GM12878 (cell line): ENCODE measurements at regions of chr4 and their contacts with region 1.

Region 1: GRCh38 chr4:142567199-142567598 is 278.9 kb downstream of the INPP4B start:
- DNase-seq: no peak
- ATAC-seq: peak; percentile 70
- H3K4me3 ChIP-seq: no peak overlapping the region
- H3K27ac ChIP-seq: no peak overlapping the region
- H3K4me1 ChIP-seq: no peaks in the 10 kb centered on the region
- H3K27me3 ChIP-seq: no peaks in the 10 kb centered on the region
- CTCF ChIP-seq: peak in 1 of 3 experiments; percentile 28; a peak in 2 of 6 replicates
- EP300 ChIP-seq: no peak
- POLR2A ChIP-seq: no peak
- RAD21 ChIP-seq: no peak

Region 2: DNA sequence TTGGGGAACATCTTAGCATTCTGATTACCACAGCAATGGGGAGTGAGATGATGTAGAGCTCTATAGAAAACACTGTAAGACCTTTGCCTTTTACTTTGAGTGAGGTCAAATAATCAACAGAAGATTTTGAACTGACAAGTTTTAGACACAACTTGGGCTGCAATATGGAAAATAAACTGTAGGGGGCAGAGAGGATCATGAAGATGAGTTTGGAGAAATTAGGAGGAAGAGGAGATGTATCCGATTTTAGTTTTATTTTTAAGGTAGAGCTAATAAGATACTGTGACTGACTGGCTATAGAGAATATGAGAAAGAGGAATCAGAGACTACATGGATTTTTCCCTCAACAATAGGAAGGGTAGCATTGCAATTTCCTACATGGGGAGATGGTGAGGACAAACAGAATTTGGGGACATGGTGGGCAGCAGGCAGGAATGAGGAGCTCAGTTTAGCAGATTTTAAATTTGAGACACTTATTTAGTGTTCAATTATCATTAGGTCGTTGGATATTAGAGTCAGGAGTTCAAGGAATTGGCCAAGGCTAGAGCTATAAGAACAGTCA is 284.2 kb before region 1 on chr4:
- CTCF ChIA-PET with region 1: interaction called, 21 read pairs
- POLR2A ChIA-PET with region 1: no interaction called
- RAD21 ChIA-PET with region 1: interaction called, 31 read pairs
- SMC1A ChIA-PET with region 1: interaction called, 13 read pairs
- in situ Hi-C with region 1: no loop called
- intact Hi-C with region 1: no loop called
- DNase-seq: no peak
- ATAC-seq: peak; percentile 47
- H3K4me3 ChIP-seq: no peak overlapping the region
- H3K27ac ChIP-seq: no peak overlapping the region
- H3K4me1 ChIP-seq: no peaks in the 10 kb centered on the region
- H3K27me3 ChIP-seq: no peaks in the 10 kb centered on the region
- CTCF ChIP-seq: peak; percentile 48 to 53 (median 49); a peak in 5 of 6 replicates
- EP300 ChIP-seq: no peak
- POLR2A ChIP-seq: no peak
- RAD21 ChIP-seq: peak; percentile 35

Region 3: DNA sequence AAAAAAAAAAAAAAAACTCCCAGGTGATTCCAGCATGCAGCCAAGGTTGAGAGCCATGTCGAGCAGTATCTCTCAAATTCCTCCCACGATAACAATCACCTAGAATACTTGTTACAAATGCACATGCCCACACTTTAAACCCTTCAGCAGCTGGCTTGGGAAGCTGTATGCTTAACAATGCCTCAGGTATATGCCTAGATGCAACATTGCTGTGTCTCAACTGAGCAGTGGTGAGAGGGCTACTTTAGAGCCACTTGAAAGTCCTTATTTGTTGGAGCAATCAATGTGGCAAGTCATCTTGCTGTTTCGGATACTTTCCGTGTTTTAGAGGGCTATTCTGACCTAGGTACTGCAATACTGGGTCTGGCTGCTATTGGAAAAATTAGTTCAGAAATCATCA is 208.5 kb before region 1 on chr4:
- CTCF ChIA-PET with region 1: interaction called, 119 read pairs
- POLR2A ChIA-PET with region 1: interaction called, 6 read pairs
- RAD21 ChIA-PET with region 1: interaction called, 133 read pairs
- SMC1A ChIA-PET with region 1: interaction called, 120 read pairs
- in situ Hi-C with region 1: no loop called
- intact Hi-C with region 1: loop called (anchors 5 kb)
- DNase-seq: no peak
- ATAC-seq: peak; percentile 45
- H3K4me3 ChIP-seq: no peak overlapping the region
- H3K27ac ChIP-seq: no peak overlapping the region
- H3K4me1 ChIP-seq: no peaks in the 10 kb centered on the region
- H3K27me3 ChIP-seq: no peaks in the 10 kb centered on the region
- CTCF ChIP-seq: no peak
- EP300 ChIP-seq: no peak
- POLR2A ChIP-seq: no peak
- RAD21 ChIP-seq: no peak

Region 4: GRCh38 chr4:142379277-142380057 is 187.7 kb before region 1 on chr4:
- CTCF ChIA-PET with region 1: interaction called, 12 read pairs
- POLR2A ChIA-PET with region 1: interaction called, 4 read pairs
- RAD21 ChIA-PET with region 1: interaction called, 15 read pairs
- SMC1A ChIA-PET with region 1: interaction called, 17 read pairs
- in situ Hi-C with region 1: no loop called
- intact Hi-C with region 1: no loop called
- DNase-seq: no peak
- ATAC-seq: peak; percentile 7
- H3K4me3 ChIP-seq: no peak overlapping the region
- H3K27ac ChIP-seq: no peak overlapping the region
- H3K4me1 ChIP-seq: no peaks in the 10 kb centered on the region
- H3K27me3 ChIP-seq: no peaks in the 10 kb centered on the region
- CTCF ChIP-seq: no peak
- EP300 ChIP-seq: no peak
- POLR2A ChIP-seq: no peak
- RAD21 ChIP-seq: no peak

Region 5: GRCh38 chr4:142535009-142535408 is 32.2 kb before region 1 on chr4:
- CTCF ChIA-PET with region 1: interaction called, 19 read pairs
- POLR2A ChIA-PET with region 1: interaction called, 4 read pairs
- RAD21 ChIA-PET with region 1: interaction called, 60 read pairs
- SMC1A ChIA-PET with region 1: interaction called, 53 read pairs
- in situ Hi-C with region 1: no loop called
- intact Hi-C with region 1: no loop called
- DNase-seq: no peak
- ATAC-seq: peak; percentile 53
- H3K4me3 ChIP-seq: no peak overlapping the region
- H3K27ac ChIP-seq: no peak overlapping the region
- H3K4me1 ChIP-seq: no peaks in the 10 kb centered on the region
- H3K27me3 ChIP-seq: no peaks in the 10 kb centered on the region
- CTCF ChIP-seq: no peak
- EP300 ChIP-seq: no peak
- POLR2A ChIP-seq: no peak
- RAD21 ChIP-seq: no peak

Region 6: GRCh38 chr4:142549726-142550463 is 17.3 kb before region 1 on chr4:
- CTCF ChIA-PET with region 1: interaction called, 15 read pairs
- POLR2A ChIA-PET with region 1: interaction called, 7 read pairs
- RAD21 ChIA-PET with region 1: interaction called, 30 read pairs
- SMC1A ChIA-PET with region 1: interaction called, 107 read pairs
- in situ Hi-C with region 1: no loop called
- intact Hi-C with region 1: no loop called
- DNase-seq: no peak
- ATAC-seq: peak; percentile 35
- H3K4me3 ChIP-seq: no peak overlapping the region
- H3K27ac ChIP-seq: no peak overlapping the region
- H3K4me1 ChIP-seq: no peaks in the 10 kb centered on the region
- H3K27me3 ChIP-seq: no peaks in the 10 kb centered on the region
- CTCF ChIP-seq: no peak
- EP300 ChIP-seq: no peak
- POLR2A ChIP-seq: no peak
- RAD21 ChIP-seq: no peak

Region 7: GRCh38 chr4:142719854-142720541 is 152.8 kb after region 1 on chr4:
- CTCF ChIA-PET with region 1: interaction called, 14 read pairs
- POLR2A ChIA-PET with region 1: no interaction called
- RAD21 ChIA-PET with region 1: interaction called, 19 read pairs
- SMC1A ChIA-PET with region 1: interaction called, 8 read pairs
- in situ Hi-C with region 1: no loop called
- intact Hi-C with region 1: loop called (anchors 5 kb)
- DNase-seq: no peak
- ATAC-seq: peak; percentile 67
- H3K4me3 ChIP-seq: no peak overlapping the region
- H3K27ac ChIP-seq: no peak overlapping the region
- H3K4me1 ChIP-seq: no peaks in the 10 kb centered on the region
- H3K27me3 ChIP-seq: no peaks in the 10 kb centered on the region
- CTCF ChIP-seq: peak; percentile 19 to 49 (median 32); a peak in 3 of 6 replicates
- EP300 ChIP-seq: no peak
- POLR2A ChIP-seq: no peak
- RAD21 ChIP-seq: peak; percentile 54